ENCODE measurements at regions of chr1 and their contacts with region 1.

Region 1: DNA sequence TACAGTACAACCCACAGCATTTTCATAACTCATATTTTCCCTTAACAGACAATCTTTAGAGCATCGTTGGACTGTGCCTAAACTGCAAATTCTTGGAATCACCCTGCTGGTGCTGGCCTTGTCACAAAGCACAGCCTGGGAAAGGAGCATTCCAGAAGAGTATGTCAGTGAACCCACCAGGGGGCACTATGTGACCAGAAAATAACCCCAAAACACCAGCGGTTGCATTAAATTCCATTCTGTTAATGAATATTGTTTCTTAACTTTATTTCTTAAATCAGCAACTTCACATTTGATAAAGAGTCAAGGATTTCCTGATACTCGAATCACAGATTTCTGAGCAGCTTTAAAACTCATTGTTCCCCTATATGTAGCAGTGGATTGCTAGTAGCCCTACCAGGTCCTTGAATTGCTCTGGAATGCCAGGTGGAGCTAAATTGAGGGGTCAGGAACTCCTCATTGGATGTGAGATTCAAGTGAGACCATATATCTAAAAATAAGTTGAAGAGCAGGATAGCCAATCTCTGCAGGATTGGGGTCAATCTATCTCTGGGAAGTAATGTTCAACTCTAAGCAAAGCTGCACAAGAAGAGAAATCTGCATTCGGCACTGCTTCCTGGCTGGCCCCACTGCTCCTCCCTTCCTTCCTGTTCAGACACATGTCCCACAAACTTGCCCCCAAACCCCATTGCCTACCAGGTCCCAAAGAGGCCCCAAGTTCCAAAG is 12.7 kb upstream of the RAB4A start:
- DNase-seq: peak in 1 of 2 donors; percentile 39
- ATAC-seq: peak; percentile 83 to 89 (median 84)
- H3K4me3 ChIP-seq: no peak overlapping the region
- H3K27ac ChIP-seq: no peak overlapping the region
- H3K4me1 ChIP-seq: no peaks in the 10 kb centered on the region
- H3K27me3 ChIP-seq: no peaks in the 10 kb centered on the region
- CTCF ChIP-seq: peak; percentile 90

Region 2: GRCh38 chr1:229217734-229218133 is 40.5 kb before region 1 on chr1:
- intact Hi-C with region 1: no loop called
- DNase-seq: no peak
- ATAC-seq: no peak
- H3K4me3 ChIP-seq: no peak overlapping the region
- H3K27ac ChIP-seq: no peak overlapping the region
- H3K4me1 ChIP-seq: no peaks in the 10 kb centered on the region
- H3K27me3 ChIP-seq: peaks cover 0 to 4% (median 0%) of the 10 kb centered on the region in 3 donors
- CTCF ChIP-seq: no peak

Region 3: GRCh38 chr1:229310833-229311232 is 52.6 kb after region 1 on chr1:
- intact Hi-C with region 1: no loop called
- DNase-seq: no peak
- ATAC-seq: peak in 2 of 4 donors; percentile 59 to 67
- H3K4me3 ChIP-seq: no peak overlapping the region
- H3K27ac ChIP-seq: no peak overlapping the region
- H3K4me1 ChIP-seq: peaks cover 18% of the 10 kb centered on the region
- H3K27me3 ChIP-seq: no peaks in the 10 kb centered on the region
- CTCF ChIP-seq: no peak

Region 4: DNA sequence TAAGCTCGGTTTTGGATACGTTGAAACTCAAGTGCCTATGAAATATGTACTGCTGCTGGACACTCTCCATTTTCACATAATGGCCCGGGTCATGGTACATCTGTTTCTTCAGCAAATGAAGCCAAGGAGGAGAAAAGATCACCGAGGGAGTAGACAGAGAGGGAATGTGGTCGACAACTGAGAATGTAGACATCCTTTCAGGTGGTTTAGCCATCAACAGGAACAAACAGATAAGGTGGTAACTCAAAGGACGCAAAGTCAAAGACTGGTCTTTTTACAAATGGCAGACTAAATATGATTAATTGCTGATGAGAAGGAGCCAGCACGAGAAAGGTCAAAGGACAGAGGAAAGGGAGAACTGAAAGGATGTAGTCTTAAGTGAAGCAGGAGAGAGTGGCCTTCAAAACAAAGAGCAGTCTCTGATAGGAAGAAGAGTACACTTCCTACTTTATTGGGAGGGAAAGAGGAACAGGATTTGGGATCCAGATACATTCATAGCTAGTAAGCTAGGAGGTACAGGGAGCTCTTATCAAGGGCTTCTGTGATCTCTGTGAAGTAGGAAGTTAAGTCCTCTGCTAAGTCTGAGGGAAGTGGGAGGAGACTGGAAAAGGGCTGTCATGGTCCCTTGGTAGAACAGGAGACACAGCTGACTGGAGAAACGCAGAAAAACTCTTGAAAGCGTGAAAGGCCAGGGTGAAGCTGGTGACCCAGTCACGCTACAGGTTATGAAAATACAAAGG is 221.6 kb after region 1 on chr1:
- intact Hi-C with region 1: loop called (anchors 1 to 2 kb)
- DNase-seq: no peak
- ATAC-seq: peak in 1 of 4 donors; percentile 24
- H3K4me3 ChIP-seq: no peak overlapping the region
- H3K27ac ChIP-seq: no peak overlapping the region
- H3K4me1 ChIP-seq: no peaks in the 10 kb centered on the region
- H3K27me3 ChIP-seq: no peaks in the 10 kb centered on the region
- CTCF ChIP-seq: no peak